ENCODE measurements at regions of chr11 and their contacts with region 1.

Region 1: DNA sequence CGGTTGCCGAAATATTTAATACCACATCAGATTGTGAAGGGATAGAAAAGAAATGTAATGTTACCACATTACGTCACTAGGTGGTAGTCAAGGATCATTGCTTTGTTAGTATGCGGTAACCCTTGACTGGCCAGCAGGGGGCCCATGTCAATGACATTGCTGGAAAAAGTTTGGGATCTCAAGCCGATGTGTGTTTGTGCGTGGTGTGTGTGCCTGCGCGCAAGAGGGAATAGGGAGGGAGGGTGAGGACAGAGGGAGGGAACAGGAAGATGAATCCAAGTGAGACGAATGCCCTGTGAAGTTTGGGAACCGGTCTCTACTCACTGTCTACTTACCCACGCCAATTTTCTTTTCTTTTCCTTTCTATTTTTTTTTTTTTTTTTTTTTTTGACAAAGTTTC is 10.7 kb upstream of the MRGPRX2 start:
- DNase-seq: peak; percentile 82
- H3K4me3 ChIP-seq: no peak overlapping the region
- H3K27ac ChIP-seq: no peak overlapping the region
- H3K4me1 ChIP-seq: peaks cover 4% of the 10 kb centered on the region
- H3K27me3 ChIP-seq: no peaks in the 10 kb centered on the region
- CTCF ChIP-seq: peak; percentile 81

Region 2: DNA sequence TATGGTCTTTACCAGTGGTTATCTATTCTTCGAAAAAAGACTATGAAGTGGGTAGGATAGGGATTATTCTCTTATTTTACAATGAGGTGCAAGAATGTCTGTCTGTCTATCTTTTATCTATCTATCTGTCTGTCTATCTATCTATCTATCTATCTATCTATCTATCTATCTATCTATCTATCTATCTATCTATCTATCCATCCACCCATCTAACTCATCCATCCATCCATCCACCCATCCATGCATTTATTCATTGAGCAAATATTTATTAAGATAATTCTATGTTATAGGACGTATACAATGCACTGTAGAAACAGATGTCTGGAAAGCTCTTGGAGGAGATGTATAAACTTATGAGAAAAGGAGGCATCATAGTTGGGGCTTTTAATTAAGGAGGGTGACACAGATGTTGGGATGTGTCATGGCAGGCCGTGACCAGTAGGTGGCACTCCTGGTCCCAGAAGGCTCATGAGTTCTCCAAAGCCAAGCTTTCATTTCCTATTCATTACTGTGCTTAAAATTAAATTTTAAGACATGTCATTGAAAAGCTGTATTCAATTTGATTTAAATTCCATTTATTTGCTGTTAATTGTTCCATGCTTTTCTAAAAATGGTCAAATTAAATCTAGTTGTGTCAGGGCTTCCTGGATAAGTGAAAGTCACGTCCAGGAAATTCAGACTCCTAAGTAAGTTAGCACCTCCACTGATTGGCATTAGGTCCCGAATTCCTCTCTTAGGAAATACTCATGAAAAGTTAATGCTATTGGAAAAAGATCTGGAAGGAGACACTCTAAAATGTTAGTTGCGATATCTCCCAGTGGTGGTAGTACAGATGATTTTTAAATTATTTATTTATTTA is 188.5 kb after region 1 on chr11:
- intact Hi-C with region 1: loop called (anchors 10 kb)
- DNase-seq: peak; percentile 78
- H3K4me3 ChIP-seq: no peak overlapping the region
- H3K27ac ChIP-seq: no peak overlapping the region
- H3K4me1 ChIP-seq: no peaks in the 10 kb centered on the region
- H3K27me3 ChIP-seq: no peaks in the 10 kb centered on the region
- CTCF ChIP-seq: peak; percentile 97

Region 3: DNA sequence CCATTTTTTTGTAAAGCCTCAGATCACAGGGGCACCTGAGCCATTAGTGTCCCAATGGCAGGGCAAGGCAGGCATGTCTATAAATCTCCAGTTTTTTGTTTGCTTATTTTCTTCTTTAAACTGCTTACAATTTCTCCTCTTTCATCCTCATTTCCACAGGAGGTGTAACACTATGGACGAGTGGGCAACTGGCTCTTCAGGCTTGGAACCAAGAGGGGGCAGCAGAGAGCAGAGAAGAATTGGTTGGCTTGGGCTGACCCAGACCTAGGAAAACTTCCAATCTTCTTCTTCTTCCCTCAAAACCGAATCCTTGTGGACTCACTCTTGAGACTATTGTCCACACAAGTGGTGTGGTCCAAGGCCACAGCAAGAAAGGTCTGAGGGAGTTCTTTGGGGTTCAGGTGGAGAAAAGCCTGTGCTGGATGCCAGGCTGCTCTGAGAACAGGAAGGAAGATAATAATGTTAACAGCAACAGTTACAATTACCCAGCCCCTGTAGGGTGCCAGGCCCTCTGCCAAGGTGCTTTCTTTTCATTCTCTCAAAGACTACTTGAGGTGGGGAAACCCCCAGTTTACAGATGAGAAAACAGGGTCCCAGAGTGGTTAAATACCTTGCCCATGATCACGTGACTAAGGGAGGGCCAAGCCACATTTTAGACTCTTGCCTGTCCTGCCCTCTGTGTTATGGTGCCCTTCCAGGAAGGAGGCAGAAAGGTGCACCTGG is 240.2 kb after region 1 on chr11:
- intact Hi-C with region 1: loop called (anchors 10 kb)
- DNase-seq: peak; percentile 78
- H3K4me3 ChIP-seq: no peak overlapping the region
- H3K27ac ChIP-seq: no peak overlapping the region
- H3K4me1 ChIP-seq: no peaks in the 10 kb centered on the region
- H3K27me3 ChIP-seq: no peaks in the 10 kb centered on the region
- CTCF ChIP-seq: peak; percentile 82